ENCODE measurements at regions of chr6 and their contacts with region 1.

Region 1: GRCh38 chr6:45922728-45923351 is 92.8 kb downstream of the CLIC5 start:
- DNase-seq: peak; percentile 67
- ATAC-seq: peak; percentile 70
- H3K4me3 ChIP-seq: no peak overlapping the region
- H3K4me3 Mint-ChIP-seq: no peak overlapping the region
- H3K27ac ChIP-seq: no peak overlapping the region
- H3K27ac Mint-ChIP-seq: no peak overlapping the region
- H3K4me1 ChIP-seq: no peaks in the 10 kb centered on the region
- H3K4me1 Mint-ChIP-seq: peaks cover 3% of the 10 kb centered on the region
- H3K27me3 ChIP-seq: no peaks in the 10 kb centered on the region
- H3K27me3 Mint-ChIP-seq: peaks cover 9% of the 10 kb centered on the region
- CTCF ChIP-seq: peak; percentile 78

Region 2: DNA sequence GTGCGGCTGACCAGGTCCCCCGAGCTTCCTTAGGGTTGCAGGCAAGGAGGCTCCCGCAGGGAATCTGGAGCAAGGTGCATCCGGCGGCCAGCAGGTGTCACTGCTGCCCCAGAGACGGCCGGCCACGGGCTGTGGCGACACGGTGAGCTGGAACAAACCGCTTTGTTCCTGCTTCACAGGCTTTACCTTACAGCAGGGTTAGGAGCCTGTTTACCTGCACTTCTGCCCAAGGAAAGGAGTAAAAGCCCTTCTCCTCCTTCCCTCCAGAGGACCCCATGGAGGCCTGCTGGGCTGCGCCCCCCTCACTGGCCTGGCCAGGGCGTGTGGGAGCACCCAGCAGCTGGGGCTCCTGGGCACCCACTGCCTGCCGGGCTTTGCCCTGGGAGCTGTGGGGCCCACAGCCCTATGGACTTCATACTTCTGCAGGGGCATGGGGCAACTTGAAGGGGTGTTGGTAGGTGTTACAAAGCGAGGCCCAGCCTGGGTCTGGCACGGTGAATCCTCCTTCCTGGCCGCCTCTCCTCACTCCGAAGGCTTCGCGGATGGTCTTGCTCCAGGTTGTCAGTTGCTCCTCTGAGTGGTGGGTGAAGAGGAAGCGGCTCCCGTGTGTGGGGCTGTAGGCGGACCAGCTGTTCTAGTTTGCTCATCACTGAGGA is 1446.9 kb before region 1 on chr6:
- CTCF ChIA-PET with region 1: interaction called, 65 read pairs
- POLR2A ChIA-PET with region 1: no interaction called
- intact Hi-C with region 1: no loop called
- DNase-seq: peak; percentile 63
- ATAC-seq: peak; percentile 39
- H3K4me3 ChIP-seq: no peak overlapping the region
- H3K4me3 Mint-ChIP-seq: no peak overlapping the region
- H3K27ac ChIP-seq: no peak overlapping the region
- H3K27ac Mint-ChIP-seq: no peak overlapping the region
- H3K4me1 ChIP-seq: peaks cover 0 to 6% of the 10 kb centered on the region in 2 donors
- H3K4me1 Mint-ChIP-seq: no peaks in the 10 kb centered on the region
- H3K27me3 ChIP-seq: peaks cover 0 to 9% (median 1%) of the 10 kb centered on the region in 4 experiments
- H3K27me3 Mint-ChIP-seq: peaks cover 15% of the 10 kb centered on the region
- CTCF ChIP-seq: peak; percentile 72

Region 3: DNA sequence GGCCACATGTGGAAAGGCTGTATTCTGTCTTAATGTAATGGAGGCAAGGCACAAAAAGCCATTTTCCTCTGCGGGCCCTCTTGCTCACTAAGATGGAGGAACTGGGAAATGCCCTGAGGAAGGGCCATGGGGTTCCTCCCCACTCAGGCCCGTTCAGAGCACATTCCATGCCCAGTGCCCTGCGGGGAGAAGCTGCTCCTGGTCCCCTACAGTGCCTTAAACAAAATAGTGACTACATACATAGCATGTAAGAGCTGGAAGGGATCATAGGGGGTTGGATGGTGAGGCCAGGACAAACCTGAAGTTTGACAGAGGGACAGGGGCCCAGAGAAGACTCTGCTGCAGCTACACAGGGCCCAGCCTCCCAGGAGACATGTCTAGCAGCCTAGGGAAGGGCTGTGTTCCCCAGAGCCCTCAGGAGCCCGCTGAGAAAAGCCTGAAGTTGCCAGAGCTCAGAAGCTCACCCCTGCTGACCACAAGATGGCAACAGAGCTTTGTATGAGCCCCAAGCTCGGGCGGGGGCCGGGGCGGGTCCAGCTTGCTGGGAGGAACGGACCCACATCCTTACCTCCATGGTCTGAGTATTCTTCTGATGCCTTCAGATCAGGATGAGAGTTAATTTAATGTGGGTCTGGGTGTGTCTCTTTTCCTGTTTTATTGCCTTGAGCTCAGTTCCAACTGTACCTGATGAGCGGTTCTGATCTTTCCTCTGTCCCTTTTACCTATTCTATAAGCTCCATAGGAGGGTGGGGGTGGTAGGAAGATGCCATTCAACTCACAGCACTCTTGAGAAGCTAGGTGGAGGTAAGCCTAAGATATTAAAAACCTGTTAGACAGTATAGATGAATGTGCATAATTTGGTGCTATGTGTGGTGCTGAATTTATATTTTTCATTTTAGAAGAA is 1292.5 kb before region 1 on chr6:
- CTCF ChIA-PET with region 1: interaction called, 17 read pairs
- POLR2A ChIA-PET with region 1: no interaction called
- intact Hi-C with region 1: no loop called
- DNase-seq: no peak
- ATAC-seq: no peak
- H3K4me3 ChIP-seq: no peak overlapping the region
- H3K4me3 Mint-ChIP-seq: no peak overlapping the region
- H3K27ac ChIP-seq: no peak overlapping the region
- H3K27ac Mint-ChIP-seq: no peak overlapping the region
- H3K4me1 ChIP-seq: peaks cover 0 to 8% of the 10 kb centered on the region in 2 donors
- H3K4me1 Mint-ChIP-seq: peaks cover 4% of the 10 kb centered on the region
- H3K27me3 ChIP-seq: peaks cover 0 to 3% (median 0%) of the 10 kb centered on the region in 4 experiments
- H3K27me3 Mint-ChIP-seq: peaks cover 26% of the 10 kb centered on the region
- CTCF ChIP-seq: no peak

Region 4: GRCh38 chr6:45086360-45087084 is 836.3 kb before region 1 on chr6:
- CTCF ChIA-PET with region 1: interaction called, 3 read pairs
- POLR2A ChIA-PET with region 1: no interaction called
- intact Hi-C with region 1: loop called (anchors 5 kb)
- DNase-seq: no peak
- ATAC-seq: no peak
- H3K4me3 ChIP-seq: no peak overlapping the region
- H3K4me3 Mint-ChIP-seq: no peak overlapping the region
- H3K27ac ChIP-seq: no peak overlapping the region
- H3K27ac Mint-ChIP-seq: no peak overlapping the region
- H3K4me1 ChIP-seq: no peaks in the 10 kb centered on the region
- H3K4me1 Mint-ChIP-seq: no peaks in the 10 kb centered on the region
- H3K27me3 ChIP-seq: no peaks in the 10 kb centered on the region
- H3K27me3 Mint-ChIP-seq: no peaks in the 10 kb centered on the region
- CTCF ChIP-seq: no peak

Region 5: DNA sequence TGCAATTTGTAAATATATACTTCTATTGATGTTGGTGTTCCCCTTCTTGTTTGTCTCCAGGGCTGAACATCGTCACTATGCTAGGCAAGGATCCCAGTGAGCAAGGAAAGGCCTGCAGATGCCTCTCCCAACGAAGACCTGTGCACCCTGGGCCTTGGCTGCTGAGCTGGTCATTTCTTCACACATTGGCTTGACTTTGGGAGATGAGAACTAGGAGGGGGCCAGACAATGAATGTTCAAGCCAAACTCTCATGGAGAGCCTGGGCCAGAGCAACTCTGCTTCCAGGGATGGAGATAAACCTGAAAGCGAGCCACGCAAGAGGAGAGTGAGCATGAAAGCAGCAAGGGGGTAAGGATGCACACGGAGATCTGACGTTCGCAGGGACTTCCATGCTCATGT is 11.1 kb before region 1 on chr6:
- CTCF ChIA-PET with region 1: interaction called, 44 read pairs
- POLR2A ChIA-PET with region 1: no interaction called
- intact Hi-C with region 1: no loop called
- DNase-seq: no peak
- ATAC-seq: no peak
- H3K4me3 ChIP-seq: no peak overlapping the region
- H3K4me3 Mint-ChIP-seq: no peak overlapping the region
- H3K27ac ChIP-seq: no peak overlapping the region
- H3K27ac Mint-ChIP-seq: no peak overlapping the region
- H3K4me1 ChIP-seq: no peaks in the 10 kb centered on the region
- H3K4me1 Mint-ChIP-seq: no peaks in the 10 kb centered on the region
- H3K27me3 ChIP-seq: no peaks in the 10 kb centered on the region
- H3K27me3 Mint-ChIP-seq: no peaks in the 10 kb centered on the region
- CTCF ChIP-seq: no peak

Region 6: GRCh38 chr6:45997875-45998506 is 75.2 kb after region 1 on chr6:
- CTCF ChIA-PET with region 1: no interaction called
- POLR2A ChIA-PET with region 1: no interaction called
- intact Hi-C with region 1: no loop called
- DNase-seq: no peak
- ATAC-seq: no peak
- H3K4me3 ChIP-seq: no peak overlapping the region
- H3K4me3 Mint-ChIP-seq: no peak overlapping the region
- H3K27ac ChIP-seq: no peak overlapping the region
- H3K27ac Mint-ChIP-seq: no peak overlapping the region
- H3K4me1 ChIP-seq: no peaks in the 10 kb centered on the region
- H3K4me1 Mint-ChIP-seq: no peaks in the 10 kb centered on the region
- H3K27me3 ChIP-seq: no peaks in the 10 kb centered on the region
- H3K27me3 Mint-ChIP-seq: peaks cover 3% of the 10 kb centered on the region
- CTCF ChIP-seq: no peak